Vagina (tissue), 2 donors: ENCODE measurements at regions of chrX and their contacts with region 1.

Region 1: DNA sequence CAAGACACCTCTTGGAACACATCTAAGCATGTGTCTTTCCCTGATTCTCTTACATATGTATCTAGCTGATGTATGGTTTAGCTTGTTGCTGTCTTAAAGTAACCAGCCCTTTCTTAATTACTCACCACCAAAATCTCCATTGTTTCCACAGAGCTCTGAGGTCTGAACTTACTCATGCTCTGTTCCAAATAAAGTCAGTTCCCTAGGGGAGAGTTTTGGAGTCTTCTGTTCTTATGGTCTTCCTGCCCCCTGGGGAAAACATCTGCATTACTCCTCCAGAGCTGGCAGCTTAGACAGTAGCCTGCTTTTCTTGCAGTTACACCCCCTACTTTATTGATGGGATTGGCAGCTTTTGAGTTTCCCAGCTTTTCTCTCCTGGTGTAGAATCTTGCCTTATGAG is 125.8 kb downstream of the EDA start:
- DNase-seq: no peak
- H3K4me3 ChIP-seq: no peak overlapping the region
- H3K27ac ChIP-seq: no peak overlapping the region
- H3K4me1 ChIP-seq: no peaks in the 10 kb centered on the region
- H3K27me3 ChIP-seq: no peaks in the 10 kb centered on the region
- CTCF ChIP-seq: no peak
- POLR2A ChIP-seq: no peak

Region 2: DNA sequence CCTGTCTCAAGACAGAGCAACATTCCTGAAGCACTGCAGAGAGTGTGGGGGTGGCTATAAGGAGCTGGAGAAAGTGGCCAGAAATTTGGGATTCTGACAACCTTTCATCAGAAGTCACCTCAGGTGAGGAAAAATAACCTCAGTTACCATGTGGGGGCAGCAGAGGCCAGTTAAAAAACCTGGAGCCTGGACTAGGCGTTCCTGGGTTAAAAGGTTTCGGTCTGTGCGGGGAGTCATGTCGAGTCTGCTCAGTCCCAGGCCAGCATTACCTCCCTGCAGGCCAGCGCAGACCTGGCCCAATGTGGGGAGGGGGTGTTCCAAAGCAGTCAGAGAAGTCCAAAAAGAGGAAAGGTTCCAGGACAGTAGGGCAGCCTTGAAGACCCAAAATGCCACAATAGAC is 248.5 kb before region 1 on chrX:
- intact Hi-C with region 1: no loop called
- DNase-seq: peak in 1 of 2 donors; percentile 58
- H3K4me3 ChIP-seq: no peak overlapping the region
- H3K27ac ChIP-seq: no peak overlapping the region
- H3K4me1 ChIP-seq: no peaks in the 10 kb centered on the region
- H3K27me3 ChIP-seq: no peaks in the 10 kb centered on the region
- CTCF ChIP-seq: no peak
- POLR2A ChIP-seq: no peak

Region 3: GRCh38 chrX:69761633-69762032 is 19.9 kb after region 1 on chrX:
- intact Hi-C with region 1: no loop called
- DNase-seq: no peak
- H3K4me3 ChIP-seq: no peak overlapping the region
- H3K27ac ChIP-seq: no peak overlapping the region
- H3K4me1 ChIP-seq: no peaks in the 10 kb centered on the region
- H3K27me3 ChIP-seq: no peaks in the 10 kb centered on the region
- CTCF ChIP-seq: no peak
- POLR2A ChIP-seq: no peak

Region 4: GRCh38 chrX:69991685-69992084 is 250.0 kb after region 1 on chrX:
- intact Hi-C with region 1: loop called (anchors 5 kb)
- DNase-seq: no peak
- H3K4me3 ChIP-seq: no peak overlapping the region
- H3K27ac ChIP-seq: no peak overlapping the region
- H3K4me1 ChIP-seq: no peaks in the 10 kb centered on the region
- H3K27me3 ChIP-seq: no peaks in the 10 kb centered on the region
- CTCF ChIP-seq: no peak
- POLR2A ChIP-seq: no peak